Activated CD4-positive, alpha-beta memory T cell treated with anti-CD3 and anti-CD28 coated beads for 36 hours (primary cell): ENCODE measurements at regions of chr21 and their contacts with region 1.

Region 1: DNA sequence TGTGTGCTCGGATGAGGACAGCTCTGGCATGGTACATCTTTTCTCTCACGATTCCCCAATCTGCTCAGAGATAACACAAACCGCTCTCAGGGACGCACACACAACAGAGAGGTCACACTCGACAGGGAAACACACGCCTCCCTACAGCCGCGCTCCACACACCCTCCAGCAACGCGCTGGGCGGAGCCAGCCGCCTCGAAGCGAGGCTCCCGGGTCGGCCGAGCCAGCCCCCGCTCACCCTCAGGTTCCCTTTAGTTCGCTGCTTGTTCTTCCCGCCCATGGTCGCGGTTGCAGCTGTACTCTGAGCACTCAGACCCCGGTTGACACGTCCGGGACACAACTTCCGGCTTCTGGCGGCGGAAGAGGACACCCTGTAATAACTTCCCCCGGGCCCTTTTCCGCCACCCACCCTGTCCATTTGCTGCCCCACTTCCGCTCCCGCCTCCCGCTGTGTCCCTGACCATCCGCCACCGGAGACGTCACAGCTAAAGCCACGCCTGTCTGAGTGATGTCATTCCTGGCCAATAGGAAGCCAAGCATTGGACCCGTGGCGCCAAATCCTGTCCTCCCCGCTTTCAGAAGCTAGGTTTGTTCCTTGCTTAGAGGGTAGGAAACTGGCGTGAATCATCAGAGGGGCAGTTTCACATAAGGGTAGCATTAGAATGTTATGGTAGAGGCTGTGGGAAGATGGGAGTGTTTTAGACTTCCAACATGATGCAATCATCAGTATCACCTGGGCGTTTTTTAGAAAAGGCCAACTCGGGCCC is at the start of gene LTN1:
- DNase-seq: peak; percentile 100
- H3K4me3 Mint-ChIP-seq: peak within 1 kb of the TSS; percentile 93
- H3K27ac Mint-ChIP-seq: peak within 1 kb of the TSS; percentile 95
- H3K4me1 Mint-ChIP-seq: peaks cover 48% of the 10 kb centered on the region
- H3K27me3 Mint-ChIP-seq: no peaks in the 10 kb centered on the region
- total RNA-seq, gene LTN1: 26.7 to 29.1 TPM

Region 2: GRCh38 chr21:28832013-28832714 is 160.5 kb before region 1 on chr21:
- CTCF ChIA-PET with region 1: no interaction called
- POLR2A ChIA-PET with region 1: interaction called, 5 read pairs
- intact Hi-C with region 1: loop called (anchors 5 kb)
- DNase-seq: no peak
- H3K4me3 Mint-ChIP-seq: no peak overlapping the region
- H3K27ac Mint-ChIP-seq: peak overlapping the region; percentile 63
- H3K4me1 Mint-ChIP-seq: peaks cover 57% of the 10 kb centered on the region
- H3K27me3 Mint-ChIP-seq: no peaks in the 10 kb centered on the region

Region 3: GRCh38 chr21:28904961-28905435 is 87.7 kb before region 1 on chr21:
- CTCF ChIA-PET with region 1: no interaction called
- POLR2A ChIA-PET with region 1: no interaction called
- intact Hi-C with region 1: no loop called
- DNase-seq: no peak
- H3K4me3 Mint-ChIP-seq: no peak overlapping the region
- H3K27ac Mint-ChIP-seq: no peak overlapping the region
- H3K4me1 Mint-ChIP-seq: no peaks in the 10 kb centered on the region
- H3K27me3 Mint-ChIP-seq: peaks cover 2% of the 10 kb centered on the region

Region 4: GRCh38 chr21:29018540-29018939 is 25.8 kb after region 1 on chr21:
- CTCF ChIA-PET with region 1: no interaction called
- POLR2A ChIA-PET with region 1: interaction called, 23 read pairs
- intact Hi-C with region 1: no loop called
- DNase-seq: no peak
- H3K4me3 Mint-ChIP-seq: peak overlapping the region; percentile 86
- H3K27ac Mint-ChIP-seq: peak overlapping the region; percentile 93
- H3K4me1 Mint-ChIP-seq: peaks cover 29% of the 10 kb centered on the region
- H3K27me3 Mint-ChIP-seq: no peaks in the 10 kb centered on the region

Region 5: DNA sequence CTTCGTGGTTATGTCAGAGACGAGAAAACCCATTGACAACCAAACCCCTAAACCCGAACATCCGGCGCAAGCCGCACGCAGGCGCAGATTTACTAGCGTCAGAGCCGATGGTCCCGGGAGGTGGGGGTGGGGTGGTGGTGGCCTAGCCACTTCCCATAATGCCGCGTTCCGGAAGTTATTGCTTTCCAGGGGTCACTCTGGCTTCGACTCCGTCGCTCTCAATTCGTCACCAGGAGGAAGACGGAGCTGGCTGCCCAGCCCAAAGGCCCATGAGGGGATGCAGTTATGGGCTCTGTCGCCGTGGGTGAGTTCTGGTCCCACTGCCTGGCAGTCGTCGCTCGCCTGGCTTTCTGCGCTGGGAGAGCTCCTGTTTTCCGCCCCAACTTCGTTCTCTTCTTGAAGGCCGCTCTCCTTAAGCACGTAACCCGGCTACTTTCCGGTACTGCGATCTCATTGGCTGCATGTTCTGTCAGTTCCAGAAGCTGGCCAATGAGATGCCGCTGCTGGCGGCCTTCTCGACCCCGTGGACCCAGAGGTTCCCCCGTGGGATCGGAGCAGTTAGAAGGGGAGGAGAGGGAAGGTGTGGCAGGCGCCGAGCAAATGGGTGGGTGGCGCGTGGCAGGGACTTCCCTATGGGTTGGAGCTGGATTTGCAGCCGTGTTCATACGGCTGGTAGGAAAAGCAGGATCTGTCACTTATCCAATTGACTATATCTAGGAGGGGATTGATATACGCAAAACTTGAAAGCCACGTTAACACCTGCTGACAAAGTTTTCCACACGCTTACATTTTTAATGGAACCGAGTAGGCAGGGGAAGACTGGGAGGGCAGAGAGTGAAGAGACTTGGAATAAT is 32.0 kb after region 1 on chr21 and contains the start of gene USP16:
- CTCF ChIA-PET with region 1: interaction called, 10 read pairs
- POLR2A ChIA-PET with region 1: interaction called, 23 read pairs
- intact Hi-C with region 1: loop called (anchors 1 kb)
- DNase-seq: peak; percentile 96
- H3K4me3 Mint-ChIP-seq: peak within 1 kb of the TSS; percentile 100
- H3K27ac Mint-ChIP-seq: peak within 1 kb of the TSS; percentile 100
- H3K4me1 Mint-ChIP-seq: peaks cover 50% of the 10 kb centered on the region
- H3K27me3 Mint-ChIP-seq: no peaks in the 10 kb centered on the region
- total RNA-seq, gene USP16: 39.3 to 42.1 TPM